ENCODE measurements at regions of chr6 and their contacts with region 1.

Region 1: GRCh38 chr6:34414999-34415858 is 10.6 kb downstream of the RPS10 start:
- DNase-seq: peak; percentile 71 to 84 (median 79)
- H3K4me3 ChIP-seq: no peak overlapping the region
- H3K4me3 Mint-ChIP-seq: no peak overlapping the region
- H3K27ac ChIP-seq: peak overlapping the region in 1 of 2 donors; percentile 47
- H3K27ac Mint-ChIP-seq: peak overlapping the region in 5 of 7 donors; percentile 37 to 75 (median 61)
- H3K4me1 ChIP-seq: peaks cover 0 to 4% of the 10 kb centered on the region in 2 donors
- H3K4me1 Mint-ChIP-seq: peaks cover 7% of the 10 kb centered on the region
- H3K27me3 ChIP-seq: no peaks in the 10 kb centered on the region
- H3K27me3 Mint-ChIP-seq: no peaks in the 10 kb centered on the region
- CTCF ChIP-seq: peak; percentile 80

Region 2: DNA sequence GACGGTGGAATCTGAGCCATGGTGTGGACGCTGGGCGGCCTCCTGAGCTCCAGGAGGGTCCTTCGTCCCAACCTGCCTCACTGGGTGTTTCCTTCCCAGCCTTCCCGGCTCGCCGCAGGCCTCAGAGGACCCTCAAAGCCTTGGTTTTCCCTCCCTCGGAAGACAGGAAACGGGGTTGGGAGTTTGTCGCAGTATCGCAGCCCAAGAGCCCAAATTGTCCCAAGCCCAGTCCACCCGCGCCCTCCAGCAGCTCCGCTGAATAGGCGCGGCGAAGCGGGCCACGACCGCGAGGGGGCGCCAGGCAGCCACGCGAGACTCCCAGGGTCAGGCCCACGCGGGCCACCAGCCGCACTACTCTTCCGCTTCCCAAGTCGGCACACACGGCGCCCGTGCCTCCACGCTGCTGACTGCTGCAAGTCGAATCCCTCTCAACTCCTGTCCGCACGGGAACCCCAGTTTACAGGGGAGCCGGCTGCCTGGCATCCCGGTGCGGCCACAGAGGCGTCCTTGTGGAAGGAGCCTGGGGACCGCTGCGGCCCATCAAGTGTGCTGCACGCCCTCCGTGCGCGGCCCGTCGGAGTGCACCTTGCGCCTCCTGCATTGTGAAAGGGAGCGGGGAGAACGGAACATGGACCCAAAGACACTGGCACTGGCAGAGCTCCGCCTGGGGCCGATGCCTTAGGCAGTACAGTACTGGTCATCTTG is 219.0 kb before region 1 on chr6:
- intact Hi-C with region 1: loop called (anchors 2 to 5 kb)
- DNase-seq: peak; percentile 86 to 88 (median 88)
- H3K4me3 ChIP-seq: peak overlapping the region; percentile 36 to 76 (median 47)
- H3K4me3 Mint-ChIP-seq: peak overlapping the region; percentile 85 to 93
- H3K27ac ChIP-seq: no peak overlapping the region
- H3K27ac Mint-ChIP-seq: peak overlapping the region in 3 of 7 donors; percentile 45 to 63 (median 63)
- H3K4me1 ChIP-seq: peaks cover 8 to 11% of the 10 kb centered on the region in 2 donors
- H3K4me1 Mint-ChIP-seq: peaks cover 8% of the 10 kb centered on the region
- H3K27me3 ChIP-seq: peaks cover 0 to 3% of the 10 kb centered on the region in 2 donors
- H3K27me3 Mint-ChIP-seq: peaks cover 4 to 27% (median 16%) of the 10 kb centered on the region in 3 donors
- CTCF ChIP-seq: peak; percentile 98

Measured in CD14-positive monocyte (primary cell).